HEK293 (cell line): ENCODE measurements at regions of chr17 and their contacts with region 1.

Region 1: GRCh38 chr17:55513885-55514591 is 2.8 kb upstream of the SMIM36 start:
- H3K4me3 ChIP-seq: no peak overlapping the region
- H3K27ac ChIP-seq: no peak overlapping the region
- H3K4me1 ChIP-seq: no peaks in the 10 kb centered on the region
- CTCF ChIP-seq: peak; percentile 65

Region 2: DNA sequence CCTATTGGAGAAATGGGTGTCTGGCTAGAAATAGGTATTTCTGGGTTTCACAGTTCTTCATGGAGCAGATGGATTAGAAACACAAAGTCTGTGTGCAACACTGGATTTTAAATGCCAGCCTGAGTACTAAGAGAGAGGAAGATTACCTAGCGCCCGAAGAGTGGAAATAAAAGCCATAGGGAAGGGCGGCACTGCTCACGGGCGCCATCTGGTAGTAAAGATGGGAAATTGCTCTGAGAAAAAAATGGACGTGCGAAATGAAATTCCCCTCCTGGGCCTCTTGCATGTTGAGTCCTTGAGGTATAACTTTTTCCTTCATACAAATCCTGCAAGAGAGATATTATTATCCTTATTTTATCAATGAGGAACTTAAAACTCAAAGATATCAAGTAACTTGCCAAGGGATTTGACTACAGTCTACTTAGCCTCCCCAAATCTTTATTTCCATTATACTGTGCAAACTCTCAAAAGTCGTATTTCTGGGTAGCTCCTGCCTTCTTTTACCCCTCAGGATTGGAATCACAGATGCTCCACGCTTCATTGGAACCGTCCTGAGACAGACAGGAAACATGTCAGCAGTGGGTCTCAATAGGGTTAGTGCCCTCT is 165.2 kb before region 1 on chr17:
- CTCF ChIA-PET with region 1: interaction called, 77 read pairs
- POLR2A ChIA-PET with region 1: no interaction called
- H3K4me3 ChIP-seq: no peak overlapping the region
- H3K27ac ChIP-seq: no peak overlapping the region
- H3K4me1 ChIP-seq: no peaks in the 10 kb centered on the region
- CTCF ChIP-seq: peak; percentile 63; the same call in 1 of the 2 replicates

Region 3: DNA sequence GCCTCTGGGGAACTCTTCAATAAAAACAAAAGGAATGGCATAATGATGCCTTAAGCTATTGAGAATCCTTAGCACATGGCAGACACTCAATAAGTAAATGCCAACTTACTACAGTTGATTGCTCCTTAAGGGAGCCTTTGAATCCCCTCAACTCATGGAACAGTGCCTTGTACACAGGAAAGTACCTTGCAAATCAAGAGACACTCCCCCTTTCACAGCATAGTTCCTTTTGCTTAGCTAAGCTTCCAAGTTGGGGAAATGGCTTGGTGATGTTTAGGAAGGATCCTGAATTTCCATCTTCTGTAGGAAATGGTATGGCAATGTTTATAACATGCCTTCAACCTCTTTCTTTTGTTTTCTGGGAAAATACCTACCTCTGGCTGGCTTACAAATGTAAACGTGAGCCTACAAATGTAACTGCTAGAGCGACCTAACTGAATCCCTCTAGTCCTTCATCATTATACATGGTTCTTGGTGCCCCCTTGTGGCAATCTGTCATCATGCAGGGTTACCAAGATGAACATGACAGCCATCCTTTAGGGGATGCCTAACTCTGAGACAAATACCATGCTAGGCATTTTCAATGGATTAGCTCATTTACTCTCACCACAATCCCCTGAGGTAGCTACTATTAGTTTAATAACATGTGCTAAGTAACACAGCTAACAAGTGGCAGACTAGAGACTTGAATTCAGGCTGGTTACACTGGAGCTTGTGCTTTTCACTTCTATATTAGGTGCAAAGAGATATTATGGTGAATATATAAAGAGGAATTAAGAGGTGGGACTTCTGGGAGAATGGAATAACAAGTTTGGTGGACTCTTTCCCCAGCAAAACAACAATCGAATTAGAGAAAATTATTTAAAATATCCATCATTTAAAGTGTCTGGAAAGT is 157.4 kb before region 1 on chr17:
- CTCF ChIA-PET with region 1: interaction called, 77 read pairs
- POLR2A ChIA-PET with region 1: no interaction called
- H3K4me3 ChIP-seq: no peak overlapping the region
- H3K27ac ChIP-seq: no peak overlapping the region
- H3K4me1 ChIP-seq: no peaks in the 10 kb centered on the region
- CTCF ChIP-seq: peak; percentile 26; the same call in 1 of the 2 replicates

Region 4: GRCh38 chr17:55492781-55493341 is 21.2 kb before region 1 on chr17:
- CTCF ChIA-PET with region 1: no interaction called
- POLR2A ChIA-PET with region 1: no interaction called
- H3K4me3 ChIP-seq: no peak overlapping the region
- H3K27ac ChIP-seq: no peak overlapping the region
- H3K4me1 ChIP-seq: peaks cover 14% of the 10 kb centered on the region
- CTCF ChIP-seq: no peak